ENCODE measurements at regions of chr2 and their contacts with region 1.

Region 1: GRCh38 chr2:158456309-158457066 is at the starts of genes CCDC148 and PKP4:
- DNase-seq: peak; percentile 94
- H3K4me3 ChIP-seq: peak within 1 kb of the TSS; percentile 53 to 86 (median 81)
- H3K27ac ChIP-seq: peak within 1 kb of the TSS; percentile 75
- H3K4me1 ChIP-seq: peaks cover 36% of the 10 kb centered on the region
- H3K27me3 ChIP-seq: peaks cover 7 to 13% of the 10 kb centered on the region in 2 experiments
- CTCF ChIP-seq: no peak
- POLR2A ChIP-seq: no peak
- total RNA-seq, gene CCDC148: 0.69 TPM in 1 of 2 replicates, not detected in the other
- total RNA-seq, gene PKP4: 55.1 and 68.5 TPM in 2 replicates

Region 2: DNA sequence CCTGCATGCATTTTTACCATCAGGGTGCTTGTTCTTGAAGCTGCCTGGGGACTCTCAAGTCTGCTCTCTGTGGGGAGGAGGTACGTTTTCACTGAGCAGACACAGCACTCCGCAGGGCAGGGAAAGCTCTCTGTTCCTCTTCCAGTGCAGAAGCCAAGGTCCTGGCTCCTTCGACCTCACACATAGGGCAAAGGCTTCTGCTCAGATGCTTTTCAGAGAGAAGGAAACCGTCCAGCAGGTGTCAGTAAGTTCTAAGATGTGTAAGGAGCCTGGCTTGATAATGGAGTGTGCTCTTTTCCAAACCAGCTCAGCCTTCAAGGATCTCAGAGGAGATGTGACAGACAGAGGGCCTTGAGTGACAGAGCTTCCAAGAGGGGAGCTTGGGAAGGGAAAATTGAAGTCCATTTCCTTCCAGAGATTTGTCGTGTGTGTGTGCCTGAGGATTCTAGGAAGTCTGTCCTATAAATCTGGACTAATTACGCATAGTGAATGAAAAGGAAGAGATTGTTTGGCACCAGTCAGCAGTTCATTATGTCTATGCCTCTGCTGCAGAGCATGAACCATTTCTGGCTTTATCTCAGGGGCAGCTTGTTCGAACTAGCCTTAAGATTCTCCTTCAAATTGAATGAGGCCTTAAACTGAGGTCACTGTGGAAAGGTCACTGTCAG is 422.2 kb before region 1 on chr2:
- CTCF ChIA-PET with region 1: interaction called, 7 read pairs
- POLR2A ChIA-PET with region 1: no interaction called
- dilution Hi-C with region 1: no loop called
- intact Hi-C with region 1: loop called (anchors 5 kb)
- DNase-seq: peak; percentile 51
- H3K4me3 ChIP-seq: no peak overlapping the region
- H3K27ac ChIP-seq: no peak overlapping the region
- H3K4me1 ChIP-seq: no peaks in the 10 kb centered on the region
- H3K27me3 ChIP-seq: peaks cover 13 to 23% of the 10 kb centered on the region in 2 experiments
- CTCF ChIP-seq: peak; percentile 34 to 45
- POLR2A ChIP-seq: no peak

Region 3: DNA sequence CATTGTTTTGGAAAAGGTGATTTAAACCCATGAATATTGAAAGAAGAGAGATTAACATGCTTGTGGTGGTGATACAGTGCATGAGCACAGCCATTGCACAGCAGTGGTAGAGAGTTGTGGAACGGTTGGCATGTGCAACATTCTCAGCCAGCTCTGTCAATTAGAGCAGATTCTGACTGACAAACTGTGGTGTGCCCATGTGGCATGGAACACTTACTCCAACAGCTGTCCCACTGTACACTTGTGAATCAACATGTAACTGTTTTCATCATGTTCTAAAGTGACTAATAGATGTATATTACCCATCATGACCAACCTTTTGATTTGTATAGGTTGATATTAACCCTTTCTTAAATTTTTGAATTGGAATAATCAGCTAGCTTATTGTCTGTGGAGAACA is 55.8 kb after region 1 on chr2:
- CTCF ChIA-PET with region 1: no interaction called
- POLR2A ChIA-PET with region 1: no interaction called
- dilution Hi-C with region 1: no loop called
- intact Hi-C with region 1: no loop called
- DNase-seq: no peak
- H3K4me3 ChIP-seq: no peak overlapping the region
- H3K27ac ChIP-seq: no peak overlapping the region
- H3K4me1 ChIP-seq: no peaks in the 10 kb centered on the region
- H3K27me3 ChIP-seq: no peaks in the 10 kb centered on the region
- CTCF ChIP-seq: no peak
- POLR2A ChIP-seq: no peak

Region 4: GRCh38 chr2:158539176-158540005 is 82.9 kb after region 1 on chr2:
- CTCF ChIA-PET with region 1: interaction called, 3 read pairs
- POLR2A ChIA-PET with region 1: interaction called, 3 read pairs
- dilution Hi-C with region 1: no loop called
- intact Hi-C with region 1: loop called (anchors 1 kb)
- DNase-seq: peak; percentile 92
- H3K4me3 ChIP-seq: no peak overlapping the region
- H3K27ac ChIP-seq: peak overlapping the region; percentile 28
- H3K4me1 ChIP-seq: peaks cover 13% of the 10 kb centered on the region
- H3K27me3 ChIP-seq: no peaks in the 10 kb centered on the region
- CTCF ChIP-seq: no peak
- POLR2A ChIP-seq: no peak

Region 5: DNA sequence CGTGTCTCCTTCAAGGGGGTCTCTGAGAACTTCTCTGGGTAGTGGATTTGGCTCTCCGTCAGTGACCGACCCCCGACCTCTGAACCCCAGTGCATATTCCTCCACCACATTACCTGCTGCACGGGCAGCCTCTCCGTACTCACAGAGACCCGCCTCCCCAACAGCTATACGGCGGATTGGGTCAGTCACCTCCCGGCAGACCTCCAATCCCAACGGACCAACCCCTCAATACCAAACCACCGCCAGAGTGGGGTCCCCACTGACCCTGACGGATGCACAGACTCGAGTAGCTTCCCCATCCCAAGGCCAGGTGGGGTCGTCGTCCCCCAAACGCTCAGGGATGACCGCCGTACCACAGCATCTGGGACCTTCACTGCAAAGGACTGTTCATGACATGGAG is 168.5 kb after region 1 on chr2:
- CTCF ChIA-PET with region 1: no interaction called
- POLR2A ChIA-PET with region 1: no interaction called
- dilution Hi-C with region 1: no loop called
- intact Hi-C with region 1: loop called (anchors 2 kb)
- DNase-seq: no peak
- H3K4me3 ChIP-seq: no peak overlapping the region
- H3K27ac ChIP-seq: no peak overlapping the region
- H3K4me1 ChIP-seq: peaks cover 19% of the 10 kb centered on the region
- H3K27me3 ChIP-seq: no peaks in the 10 kb centered on the region
- CTCF ChIP-seq: no peak
- POLR2A ChIP-seq: no peak

Region 6: DNA sequence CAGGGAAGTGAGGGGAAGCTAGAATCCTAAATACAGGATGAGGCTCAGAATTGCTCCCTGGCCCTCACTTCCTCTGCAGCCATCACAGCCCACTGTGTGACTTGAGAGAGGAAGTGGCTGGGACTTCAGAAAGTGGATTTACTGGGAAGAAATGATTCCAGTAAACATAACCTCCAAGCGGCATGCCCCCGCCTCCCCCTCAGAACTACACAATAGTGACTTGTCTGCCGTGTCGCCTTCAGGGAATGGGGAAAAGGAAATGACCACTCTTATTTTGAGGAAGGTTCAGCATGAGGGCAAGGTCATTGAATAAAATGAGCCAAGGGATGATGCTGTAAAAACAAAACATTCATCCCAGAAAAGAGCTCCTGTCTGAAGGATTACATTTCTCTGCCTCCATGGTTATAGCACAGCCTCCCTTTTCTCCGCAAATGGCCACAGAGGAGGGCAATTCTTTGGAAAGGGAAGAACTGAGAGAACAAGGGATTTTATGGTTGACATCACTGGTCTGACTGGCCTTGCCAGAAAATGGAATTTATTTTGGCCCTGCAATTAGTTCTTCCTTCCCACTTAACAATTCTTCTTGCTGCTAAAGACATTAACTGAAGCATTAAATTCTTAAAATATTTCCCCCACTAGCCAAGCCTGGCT is 259.8 kb after region 1 on chr2:
- CTCF ChIA-PET with region 1: interaction called, 13 read pairs
- POLR2A ChIA-PET with region 1: no interaction called
- dilution Hi-C with region 1: no loop called
- intact Hi-C with region 1: loop called (anchors 1 kb)
- DNase-seq: peak; percentile 98
- H3K4me3 ChIP-seq: no peak overlapping the region
- H3K27ac ChIP-seq: peak overlapping the region; percentile 76
- H3K4me1 ChIP-seq: peaks cover 38% of the 10 kb centered on the region
- H3K27me3 ChIP-seq: no peaks in the 10 kb centered on the region
- CTCF ChIP-seq: no peak
- POLR2A ChIP-seq: no peak